ENCODE measurements at regions of chr21 and their contacts with region 1.

Region 1: DNA sequence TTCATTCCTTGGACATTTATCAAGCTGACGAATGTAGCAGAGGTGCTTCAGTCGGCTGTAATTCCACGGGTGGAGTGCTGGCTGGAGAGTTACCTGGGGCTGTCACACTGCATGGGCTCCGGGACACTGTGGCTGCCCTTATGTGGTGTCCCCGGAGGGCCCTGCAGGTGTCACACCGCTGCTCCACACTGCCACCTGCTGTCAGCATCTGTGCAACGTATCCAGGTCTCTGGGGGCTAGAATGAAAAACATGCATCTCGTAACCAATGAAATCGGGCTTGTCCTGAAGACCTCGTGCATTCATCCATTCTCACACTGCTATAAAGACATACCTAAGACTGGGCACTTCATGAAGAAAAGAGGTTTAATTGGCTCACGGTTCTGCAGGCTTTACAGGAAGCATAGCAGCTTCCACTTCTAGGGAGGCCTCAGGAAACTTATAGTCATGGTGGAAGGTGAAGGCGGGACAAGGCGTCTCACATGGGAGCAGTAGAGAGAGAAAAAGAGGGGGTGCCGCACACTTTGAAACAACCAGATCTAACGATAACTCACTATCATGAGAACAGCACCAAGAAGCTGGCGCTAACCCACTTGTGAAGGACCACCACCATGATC is 46.7 kb upstream of the PCBP3 start:
- DNase-seq: peak; percentile 87
- CTCF ChIP-seq: peak; percentile 74

Region 2: GRCh38 chr21:45270306-45270821 is 326.4 kb before region 1 on chr21:
- in situ Hi-C with region 1: loop called (anchors 10 kb)
- DNase-seq: no peak
- CTCF ChIP-seq: no peak

Measured in GM13976 (cell line).